Heart left ventricle (tissue), 16 donors: ENCODE measurements at regions of chr7 and their contacts with region 1.

Region 1: DNA sequence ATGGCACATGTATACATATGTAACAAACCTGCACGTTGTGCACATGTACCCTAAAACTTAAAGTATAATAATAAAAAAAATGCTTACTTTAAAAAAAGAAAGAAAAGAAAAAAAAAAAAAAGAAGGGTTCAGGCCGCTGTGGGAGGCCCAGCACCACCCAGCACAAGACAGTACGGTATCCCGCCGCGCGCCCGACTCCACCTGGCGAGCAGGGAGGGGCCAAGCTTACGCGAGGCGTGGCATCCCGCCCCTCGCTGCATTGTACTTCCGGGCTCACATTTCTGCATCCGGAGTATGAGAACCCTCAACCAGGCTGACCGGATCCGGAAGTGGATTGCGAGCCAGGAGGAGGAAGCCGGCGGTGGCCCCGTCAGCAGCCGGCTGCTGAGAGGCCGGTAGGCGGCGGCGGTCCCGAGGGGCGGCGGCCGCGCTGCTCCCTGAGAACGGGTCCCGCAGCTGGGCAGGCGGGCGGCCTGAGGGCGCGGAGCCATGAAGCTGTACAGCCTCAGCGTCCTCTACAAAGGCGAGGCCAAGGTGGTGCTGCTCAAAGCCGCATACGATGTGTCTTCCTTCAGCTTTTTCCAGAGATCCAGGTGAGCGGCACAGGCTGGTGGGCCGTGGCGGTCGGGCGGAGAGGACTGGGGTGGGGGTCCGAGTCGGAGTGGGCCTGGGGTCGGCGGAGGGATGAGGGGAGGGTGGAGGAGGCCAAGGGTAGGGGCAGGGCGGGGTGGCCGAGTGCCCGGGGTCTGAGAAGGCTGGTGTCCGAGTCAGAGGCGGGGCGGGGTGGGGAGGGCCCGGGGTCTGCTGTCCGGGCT is at the start of gene YKT6:
- DNase-seq: peak; percentile 92 to 95 (median 95)
- ATAC-seq: peak; percentile 99
- H3K4me3 ChIP-seq: peak within 1 kb of the TSS; percentile 49 to 98 (median 82)
- H3K27ac ChIP-seq: peak within 1 kb of the TSS in 11 of 12 donors; percentile 40 to 87 (median 82)
- H3K4me1 ChIP-seq: peaks cover 0 to 25% (median 16%) of the 10 kb centered on the region in 12 donors
- H3K27me3 ChIP-seq: peaks cover 0 to 6% (median 0%) of the 10 kb centered on the region in 9 donors
- CTCF ChIP-seq: peak; percentile 34 to 69 (median 48)
- POLR2A ChIP-seq: peak in 1 of 2 donors; percentile 87
- total RNA-seq, gene YKT6: 43.8 to 82.2 (median 46.6) TPM

Region 2: DNA sequence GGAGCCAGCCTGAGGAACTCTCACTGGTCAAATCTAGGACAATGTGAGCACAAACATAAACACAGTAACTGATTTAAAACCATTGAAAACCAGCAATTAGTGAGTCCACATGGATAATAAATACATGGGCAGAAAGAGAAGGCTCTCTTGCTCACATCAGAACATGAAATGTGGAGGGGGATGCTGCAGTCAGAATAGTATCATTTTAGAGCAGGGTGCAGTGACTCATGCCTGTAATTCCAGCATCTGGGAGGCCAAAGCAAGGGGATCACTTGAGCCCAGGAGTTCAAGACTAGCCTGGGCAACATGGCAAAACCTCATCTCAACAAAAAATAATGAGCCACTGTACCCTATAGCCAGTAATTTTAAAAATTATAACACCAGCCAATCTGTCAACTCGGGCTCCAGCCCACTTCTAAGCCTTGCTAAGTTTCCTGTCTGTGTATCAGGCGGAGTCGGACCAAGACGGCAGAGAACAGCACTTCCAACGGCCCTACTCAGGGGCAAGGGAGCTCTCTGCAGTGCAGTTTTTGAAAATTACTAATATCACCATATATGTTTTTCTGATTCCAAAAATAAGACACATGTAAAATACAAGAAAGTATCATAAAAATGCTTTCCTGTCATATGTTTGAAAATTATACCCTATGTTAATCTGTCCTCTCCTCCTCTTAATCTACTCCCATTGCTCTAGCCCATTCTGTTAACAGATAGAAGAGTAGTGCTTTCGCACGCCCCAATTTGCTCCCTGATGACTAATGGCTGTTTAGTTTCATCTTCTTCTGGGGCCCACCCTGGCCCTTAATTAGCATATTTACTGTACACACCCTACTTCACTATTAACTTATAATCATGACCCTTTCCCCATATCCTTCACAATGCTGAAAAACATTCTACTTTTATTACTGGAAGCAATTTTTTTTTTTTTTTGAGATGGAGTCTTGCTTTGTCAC is 311.6 kb before region 1 on chr7:
- intact Hi-C with region 1: no loop called
- DNase-seq: no peak
- ATAC-seq: peak in 2 of 4 donors; percentile 18 to 36
- H3K4me3 ChIP-seq: no peak overlapping the region
- H3K27ac ChIP-seq: no peak overlapping the region
- H3K4me1 ChIP-seq: peaks cover 0 to 42% (median 21%) of the 10 kb centered on the region in 12 donors
- H3K27me3 ChIP-seq: no peaks in the 10 kb centered on the region
- CTCF ChIP-seq: no peak
- POLR2A ChIP-seq: no peak

Region 3: DNA sequence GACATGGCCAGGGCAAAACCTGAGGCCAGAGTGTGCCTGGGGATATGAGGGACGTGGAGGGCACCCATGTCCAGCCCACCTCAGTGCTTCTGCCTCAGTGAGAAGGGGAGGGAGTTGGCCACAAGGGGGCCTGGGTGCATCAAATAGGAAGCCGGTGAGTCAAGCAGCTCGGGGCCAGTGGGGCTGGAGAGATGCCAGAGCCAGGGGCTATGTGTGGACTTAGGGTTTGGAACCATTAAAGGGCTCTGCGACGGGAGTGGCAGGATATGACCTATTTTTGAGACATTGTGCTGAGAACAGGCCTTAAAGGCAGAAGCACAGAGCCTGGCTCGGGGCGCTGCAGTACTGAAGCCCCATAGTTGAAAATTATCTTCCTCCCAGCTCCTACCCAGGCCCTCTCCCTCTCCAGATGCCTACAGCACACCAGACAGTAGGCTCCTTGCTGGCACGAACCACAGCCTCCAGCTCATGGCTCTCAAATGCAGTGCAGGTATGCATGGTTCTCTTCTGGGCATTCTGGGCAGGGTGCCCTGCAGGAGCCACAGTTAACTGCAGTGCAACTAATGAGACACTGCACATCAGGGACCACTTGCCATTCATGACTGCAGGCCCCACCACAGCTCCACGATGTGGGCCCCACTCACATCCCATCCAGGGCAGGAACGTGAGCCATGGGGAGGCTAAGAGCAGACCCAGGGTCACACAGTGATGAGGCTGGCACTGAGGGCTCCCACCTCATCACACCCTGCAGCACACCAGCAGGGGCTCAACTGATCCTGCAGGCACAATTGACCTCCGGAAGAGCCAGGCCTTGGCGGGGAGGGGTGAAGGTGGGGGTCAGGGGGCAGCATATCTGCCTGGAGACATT is 128.3 kb before region 1 on chr7:
- intact Hi-C with region 1: loop called in 5 of 10 experiments (anchors 2 to 5 kb)
- DNase-seq: peak; percentile 81 to 91 (median 89)
- ATAC-seq: peak; percentile 27 to 64 (median 60)
- H3K4me3 ChIP-seq: peak overlapping the region in 1 of 12 donors; percentile 35
- H3K27ac ChIP-seq: peak overlapping the region; percentile 57 to 90 (median 76)
- H3K4me1 ChIP-seq: peaks cover 13 to 67% (median 38%) of the 10 kb centered on the region in 12 donors
- H3K27me3 ChIP-seq: no peaks in the 10 kb centered on the region
- CTCF ChIP-seq: peak; percentile 53 to 81 (median 72)
- POLR2A ChIP-seq: peak in 1 of 2 donors; percentile 34

Region 4: DNA sequence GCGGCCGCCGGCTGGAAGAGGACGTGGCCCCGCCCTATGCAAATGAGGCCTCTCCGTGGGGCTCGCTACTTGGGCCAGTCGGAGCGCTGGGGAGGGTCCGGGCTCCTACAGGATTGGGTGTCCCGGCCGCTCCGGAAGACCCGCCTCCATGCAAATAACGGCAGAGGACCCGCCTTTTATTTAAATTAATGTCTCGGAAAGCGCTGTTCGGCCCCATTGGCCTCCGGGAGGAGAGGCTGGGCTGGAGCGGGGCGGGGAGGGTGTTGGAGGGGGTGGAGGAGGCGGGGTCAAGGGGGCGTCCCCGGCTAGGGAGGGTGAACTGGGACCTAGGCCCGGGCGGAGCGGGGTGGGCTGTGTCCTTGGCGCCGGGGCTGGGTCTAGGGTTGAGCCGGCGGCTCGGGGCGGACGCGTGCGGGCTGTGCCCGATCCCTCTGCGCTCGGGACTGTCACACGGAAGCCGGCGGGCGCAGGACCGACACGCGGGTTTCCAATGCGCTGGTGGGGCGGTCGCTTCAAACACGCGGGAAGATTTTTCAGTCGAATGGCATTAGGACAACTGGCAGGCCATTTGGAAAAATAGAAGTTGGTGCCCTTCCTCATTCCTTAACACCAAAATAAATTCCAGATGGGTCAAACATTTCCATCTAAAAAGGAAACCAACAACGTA is 118.2 kb before region 1 on chr7:
- intact Hi-C with region 1: loop called in 1 of 10 experiments (anchors 5 kb)
- DNase-seq: peak; percentile 99 to 100 (median 99)
- ATAC-seq: peak; percentile 93 to 96 (median 95)
- H3K4me3 ChIP-seq: peak overlapping the region; percentile 69 to 98 (median 87)
- H3K27ac ChIP-seq: peak overlapping the region; percentile 82 to 97 (median 92)
- H3K4me1 ChIP-seq: peaks cover 0 to 53% (median 26%) of the 10 kb centered on the region in 12 donors
- H3K27me3 ChIP-seq: no peaks in the 10 kb centered on the region
- CTCF ChIP-seq: peak in 1 of 12 donors; percentile 7
- POLR2A ChIP-seq: peak; percentile 34 to 82

Region 5: GRCh38 chr7:44123190-44124003 is 77.5 kb before region 1 on chr7 and contains the start of gene POLD2:
- intact Hi-C with region 1: loop called in 2 of 10 experiments (anchors 5 to 10 kb)
- DNase-seq: peak; percentile 99
- ATAC-seq: peak; percentile 98 to 99 (median 99)
- H3K4me3 ChIP-seq: peak within 1 kb of the TSS; percentile 58 to 89 (median 77)
- H3K27ac ChIP-seq: peak within 1 kb of the TSS; percentile 71 to 94 (median 86)
- H3K4me1 ChIP-seq: peaks cover 0 to 38% (median 18%) of the 10 kb centered on the region in 12 donors
- H3K27me3 ChIP-seq: no peaks in the 10 kb centered on the region
- CTCF ChIP-seq: peak in 3 of 12 donors; percentile 14 to 22 (median 18)
- POLR2A ChIP-seq: peak in 1 of 2 donors; percentile 53
- total RNA-seq, gene POLD2: 74.1 to 150 (median 89.2) TPM

Region 6: GRCh38 chr7:44131173-44132029 is 69.5 kb before region 1 on chr7:
- intact Hi-C with region 1: loop called in 5 of 10 experiments (anchors 2 to 10 kb)
- DNase-seq: peak in 2 of 5 donors; percentile 38 to 63
- ATAC-seq: peak; percentile 45 to 79 (median 68)
- H3K4me3 ChIP-seq: no peak overlapping the region
- H3K27ac ChIP-seq: peak overlapping the region; percentile 1 to 89 (median 70)
- H3K4me1 ChIP-seq: peaks cover 0 to 39% (median 10%) of the 10 kb centered on the region in 12 donors
- H3K27me3 ChIP-seq: no peaks in the 10 kb centered on the region
- CTCF ChIP-seq: peak in 10 of 12 donors; percentile 22 to 52 (median 35)
- POLR2A ChIP-seq: no peak

Region 7: GRCh38 chr7:44257618-44258422 is 57.0 kb after region 1 on chr7:
- intact Hi-C with region 1: loop called in 1 of 10 experiments (anchors 10 kb)
- DNase-seq: peak; percentile 83 to 93 (median 87)
- ATAC-seq: peak; percentile 89 to 93 (median 92)
- H3K4me3 ChIP-seq: no peak overlapping the region
- H3K27ac ChIP-seq: peak overlapping the region; percentile 75 to 96 (median 88)
- H3K4me1 ChIP-seq: peaks cover 18 to 76% (median 56%) of the 10 kb centered on the region in 12 donors
- H3K27me3 ChIP-seq: no peaks in the 10 kb centered on the region
- CTCF ChIP-seq: peak in 4 of 12 donors; percentile 19 to 34 (median 30)
- POLR2A ChIP-seq: no peak

Region 8: GRCh38 chr7:44477063-44477830 is 276.4 kb after region 1 on chr7:
- intact Hi-C with region 1: loop called in 1 of 10 experiments (anchors 10 kb)
- DNase-seq: peak in 4 of 5 donors; percentile 38 to 62 (median 41)
- ATAC-seq: peak; percentile 86 to 89 (median 88)
- H3K4me3 ChIP-seq: no peak overlapping the region
- H3K27ac ChIP-seq: peak overlapping the region in 11 of 12 donors; percentile 19 to 68 (median 39)
- H3K4me1 ChIP-seq: peaks cover 6 to 62% (median 23%) of the 10 kb centered on the region in 12 donors
- H3K27me3 ChIP-seq: no peaks in the 10 kb centered on the region
- CTCF ChIP-seq: peak; percentile 77 to 94 (median 89)
- POLR2A ChIP-seq: no peak